ENCODE measurements at regions of chr3 and their contacts with region 1.

Region 1: GRCh38 chr3:79175870-79176269 is 591.9 kb downstream of the ROBO1 start:
- DNase-seq: no peak
- ATAC-seq: no peak
- H3K4me3 ChIP-seq: no peak overlapping the region
- H3K27ac ChIP-seq: no peak overlapping the region
- H3K4me1 ChIP-seq: no peaks in the 10 kb centered on the region
- H3K27me3 ChIP-seq: no peaks in the 10 kb centered on the region
- CTCF ChIP-seq: no peak

Region 2: DNA sequence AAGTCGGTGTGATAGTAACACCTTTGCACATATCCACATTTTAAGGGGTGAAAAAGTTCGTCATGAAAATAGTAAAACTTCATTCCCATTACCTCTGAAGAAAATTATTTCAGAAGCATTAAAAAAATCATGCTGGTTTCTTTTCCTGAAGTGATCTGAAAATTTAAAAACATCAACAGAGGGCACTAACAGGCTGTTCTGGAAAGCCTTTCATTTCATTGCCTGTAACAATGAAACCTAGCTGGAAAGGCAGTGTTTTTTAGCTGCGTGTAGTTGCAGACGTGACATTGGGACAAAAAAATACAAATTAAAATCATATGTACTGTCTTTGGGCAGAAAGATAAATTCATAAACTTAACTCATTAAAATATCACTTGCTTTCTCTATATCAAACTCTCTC is 1591.7 kb after region 1 on chr3:
- intact Hi-C with region 1: loop called in 1 of 10 experiments (anchors 5 kb)
- DNase-seq: no peak
- ATAC-seq: no peak
- H3K4me3 ChIP-seq: no peak overlapping the region
- H3K27ac ChIP-seq: no peak overlapping the region
- H3K4me1 ChIP-seq: no peaks in the 10 kb centered on the region
- H3K27me3 ChIP-seq: no peaks in the 10 kb centered on the region
- CTCF ChIP-seq: no peak

Measured in heart right ventricle (tissue), 16 donors.